T-cell (primary cell): ENCODE measurements at regions of chr16 and their contacts with region 1.

Region 1: GRCh38 chr16:67871256-67871655 is 1.6 kb upstream of the EDC4 start:
- DNase-seq: no peak
- ATAC-seq: no peak
- H3K4me3 ChIP-seq: no peak overlapping the region
- H3K4me3 Mint-ChIP-seq: peak overlapping the region in 1 of 3 donors; percentile 95
- H3K27ac ChIP-seq: no peak overlapping the region
- H3K27ac Mint-ChIP-seq: peak overlapping the region in 1 of 2 donors; percentile 91
- H3K4me1 ChIP-seq: peaks cover 14 to 38% of the 10 kb centered on the region in 2 experiments
- H3K4me1 Mint-ChIP-seq: peaks cover 28 to 38% (median 34%) of the 10 kb centered on the region in 3 donors
- H3K27me3 ChIP-seq: no peaks in the 10 kb centered on the region
- H3K27me3 Mint-ChIP-seq: no peaks in the 10 kb centered on the region

Region 2: GRCh38 chr16:67277294-67277998 is 593.8 kb before region 1 on chr16:
- CTCF ChIA-PET with region 1: no interaction called
- POLR2A ChIA-PET with region 1: no interaction called
- DNase-seq: no peak
- ATAC-seq: no peak
- H3K4me3 ChIP-seq: no peak overlapping the region
- H3K4me3 Mint-ChIP-seq: peak overlapping the region; percentile 43 to 53 (median 51)
- H3K27ac ChIP-seq: no peak overlapping the region
- H3K27ac Mint-ChIP-seq: peak overlapping the region in 1 of 2 donors; percentile 58
- H3K4me1 ChIP-seq: peaks cover 6 to 24% of the 10 kb centered on the region in 2 experiments
- H3K4me1 Mint-ChIP-seq: peaks cover 9 to 19% (median 16%) of the 10 kb centered on the region in 3 donors
- H3K27me3 ChIP-seq: no peaks in the 10 kb centered on the region
- H3K27me3 Mint-ChIP-seq: no peaks in the 10 kb centered on the region

Region 3: DNA sequence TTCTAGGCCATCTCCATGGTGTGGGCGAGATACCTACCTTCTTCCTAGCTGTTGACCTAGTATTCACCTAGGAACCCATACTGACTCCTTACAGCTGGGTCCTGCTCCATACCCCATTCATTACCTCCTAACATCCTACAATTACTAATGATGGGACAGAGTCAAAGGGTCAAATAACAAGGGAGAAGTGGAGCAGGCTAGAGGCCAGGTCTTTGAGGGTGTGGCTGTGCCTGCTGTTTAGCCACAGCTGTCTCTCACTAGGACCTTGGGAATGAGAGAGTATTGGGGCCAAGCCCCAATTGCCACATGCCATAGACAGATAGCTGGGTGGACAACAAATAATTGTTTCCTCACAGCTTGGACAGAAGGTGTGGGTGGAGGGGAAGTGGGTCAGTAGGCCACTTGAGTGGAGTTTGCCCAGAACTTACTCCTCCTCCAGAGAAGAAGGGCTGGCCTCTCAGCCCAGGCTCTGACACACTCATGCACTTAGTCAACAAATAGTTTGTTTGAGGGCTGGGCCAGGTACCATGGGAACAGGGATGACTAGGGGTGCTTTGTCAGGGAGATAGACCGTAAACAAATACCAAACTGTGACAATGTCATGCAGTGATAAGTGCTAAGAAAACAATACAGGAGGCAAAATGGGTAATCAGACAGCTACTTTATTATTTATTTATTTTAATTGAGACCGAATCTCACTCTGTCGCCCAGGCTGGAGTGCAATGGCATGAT is 13.6 kb before region 1 on chr16:
- CTCF ChIA-PET with region 1: no interaction called
- POLR2A ChIA-PET with region 1: interaction called in 1 of 2 experiments, 14 read pairs
- DNase-seq: peak in 18 of 35 experiments; percentile 9 to 50 (median 22)
- ATAC-seq: peak; percentile 48 to 64 (median 54)
- H3K4me3 ChIP-seq: no peak overlapping the region
- H3K4me3 Mint-ChIP-seq: no peak overlapping the region
- H3K27ac ChIP-seq: peak overlapping the region; percentile 55
- H3K27ac Mint-ChIP-seq: peak overlapping the region; percentile 40 to 69
- H3K4me1 ChIP-seq: peaks cover 0 to 25% of the 10 kb centered on the region in 2 experiments
- H3K4me1 Mint-ChIP-seq: peaks cover 32 to 45% (median 38%) of the 10 kb centered on the region in 3 donors
- H3K27me3 ChIP-seq: no peaks in the 10 kb centered on the region
- H3K27me3 Mint-ChIP-seq: no peaks in the 10 kb centered on the region